HCT116 (cell line): ENCODE measurements at regions of chr16 and their contacts with region 1.

Region 1: GRCh38 chr16:12489357-12489990 is 314.2 kb downstream of the CPPED1 start:
- DNase-seq: no peak
- ATAC-seq: no peak
- H3K4me3 ChIP-seq: no peak overlapping the region
- H3K27ac ChIP-seq: no peak overlapping the region
- H3K4me1 ChIP-seq: no peaks in the 10 kb centered on the region
- H3K27me3 ChIP-seq: 0 out of 2 replicates have a peak, but pooled peaks cover 3% of the 10 kb centered on the region
- CTCF ChIP-seq: no peak
- POLR2A ChIP-seq: no peak
- RAD21 ChIP-seq: no peak

Region 2: DNA sequence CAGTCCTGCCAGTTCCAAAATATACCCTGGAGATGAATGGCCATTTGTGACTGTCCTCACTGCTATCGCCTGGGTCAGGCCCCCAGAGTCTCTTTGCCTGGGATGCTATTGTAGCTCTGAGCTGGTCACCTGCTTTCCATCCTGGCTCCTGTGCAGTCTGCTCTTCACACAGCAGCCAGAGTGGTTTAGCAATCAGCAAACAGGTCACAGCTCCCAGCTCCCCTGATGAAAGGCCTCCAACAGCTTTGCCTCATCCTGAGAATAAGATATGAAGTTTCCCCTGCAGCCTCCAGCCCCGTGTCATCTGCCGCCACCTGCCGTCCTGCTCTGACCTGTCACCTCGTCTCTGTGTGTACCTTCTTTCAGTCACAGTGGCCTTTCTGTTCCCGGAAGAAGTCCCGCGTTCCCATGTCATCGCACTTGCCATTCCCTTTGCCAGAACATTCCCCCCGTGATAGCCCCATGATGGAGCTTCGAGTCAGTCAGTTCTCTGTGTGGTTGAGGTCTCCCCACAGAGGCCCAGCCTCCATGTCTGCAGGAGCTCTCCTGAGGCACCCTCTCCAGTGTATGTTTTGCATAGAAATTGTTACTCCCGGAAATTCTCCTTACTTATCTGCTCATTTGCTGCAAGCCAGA is 231.4 kb before region 1 on chr16:
- CTCF ChIA-PET with region 1: no interaction called
- POLR2A ChIA-PET with region 1: no interaction called
- RAD21 ChIA-PET with region 1: no interaction called
- intact Hi-C with region 1: no loop called
- DNase-seq: no peak
- ATAC-seq: peak; percentile 54; the same call in 1 of the 2 replicates
- H3K4me3 ChIP-seq: no peak overlapping the region
- H3K27ac ChIP-seq: no peak overlapping the region
- H3K4me1 ChIP-seq: peaks cover 4 to 6% of the 10 kb centered on the region in 2 experiments; a peak in 2 of 4 replicates
- H3K27me3 ChIP-seq: peaks cover 15% of the 10 kb centered on the region; the same call in 1 of the 2 replicates
- CTCF ChIP-seq: peak in 2 of 3 experiments; percentile 8 to 24; a peak in 1 of 6 replicates
- POLR2A ChIP-seq: no peak
- RAD21 ChIP-seq: peak; percentile 34

Region 3: DNA sequence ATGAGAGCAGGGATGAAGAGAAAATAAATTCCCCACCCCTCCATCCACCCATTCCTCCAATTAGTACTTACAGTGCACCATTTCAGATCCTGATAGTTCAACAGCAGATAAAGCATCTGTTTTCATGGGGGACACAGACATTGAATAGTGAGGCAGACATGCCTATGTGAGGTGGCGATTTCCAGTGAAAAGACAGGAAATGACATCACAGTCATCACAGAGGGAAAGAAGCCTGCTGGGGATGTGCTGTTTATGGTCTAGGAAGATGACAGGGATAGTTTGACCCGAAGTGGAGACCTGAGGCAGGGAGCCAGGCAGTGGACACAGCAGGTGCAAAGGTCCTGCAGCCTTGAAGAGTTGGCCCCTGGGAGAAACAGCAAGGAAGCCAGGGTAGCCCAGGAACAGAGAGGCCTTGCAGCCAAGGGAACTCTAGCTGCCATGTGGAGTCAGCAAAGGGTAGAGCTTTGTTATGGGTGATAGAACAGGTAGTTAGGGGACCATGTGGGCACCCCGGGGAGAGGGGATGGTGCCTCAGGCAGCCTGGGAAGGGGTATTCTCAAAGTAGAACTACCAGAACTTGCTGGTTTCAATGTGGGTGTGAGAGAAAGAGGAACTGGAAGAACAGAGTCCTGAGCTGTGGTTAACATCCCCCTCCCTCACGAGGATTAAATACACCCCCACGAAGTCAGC is 57.6 kb after region 1 on chr16:
- CTCF ChIA-PET with region 1: no interaction called
- POLR2A ChIA-PET with region 1: no interaction called
- RAD21 ChIA-PET with region 1: no interaction called
- intact Hi-C with region 1: loop called (anchors 10 kb)
- DNase-seq: no peak
- ATAC-seq: no peak
- H3K4me3 ChIP-seq: no peak overlapping the region
- H3K27ac ChIP-seq: no peak overlapping the region
- H3K4me1 ChIP-seq: peaks cover 0 to 5% of the 10 kb centered on the region in 2 experiments; a peak in 1 of 4 replicates
- H3K27me3 ChIP-seq: no peaks in the 10 kb centered on the region
- CTCF ChIP-seq: no peak
- POLR2A ChIP-seq: no peak
- RAD21 ChIP-seq: no peak